PC-9 (cell line): ENCODE measurements at regions of chr7 and their contacts with region 1.

Region 1: GRCh38 chr7:108146070-108146837 is 16.1 kb upstream of the LAMB4 start:
- DNase-seq: peak; percentile 70 to 71
- H3K4me3 ChIP-seq: no peak overlapping the region
- H3K27ac ChIP-seq: no peak overlapping the region
- H3K4me1 ChIP-seq: no peaks in the 10 kb centered on the region
- H3K27me3 ChIP-seq: no peaks in the 10 kb centered on the region
- CTCF ChIP-seq: peak; percentile 89

Region 2: GRCh38 chr7:107201795-107202450 is 944.3 kb before region 1 on chr7:
- CTCF ChIA-PET with region 1: no interaction called
- POLR2A ChIA-PET with region 1: no interaction called
- intact Hi-C with region 1: loop called (anchors 10 kb)
- DNase-seq: peak in 1 of 2 experiments; percentile 55
- H3K4me3 ChIP-seq: no peak overlapping the region
- H3K27ac ChIP-seq: no peak overlapping the region
- H3K4me1 ChIP-seq: no peaks in the 10 kb centered on the region
- H3K27me3 ChIP-seq: no peaks in the 10 kb centered on the region
- CTCF ChIP-seq: peak; percentile 67

Region 3: GRCh38 chr7:107743567-107744344 is 402.5 kb before region 1 on chr7 and contains the start of gene CBLL1:
- CTCF ChIA-PET with region 1: interaction called, 24 read pairs
- POLR2A ChIA-PET with region 1: no interaction called
- intact Hi-C with region 1: loop called (anchors 5 kb)
- DNase-seq: peak; percentile 84 to 98
- H3K4me3 ChIP-seq: peak within 1 kb of the TSS; percentile 72
- H3K27ac ChIP-seq: peak within 1 kb of the TSS; percentile 88
- H3K4me1 ChIP-seq: peaks cover 24% of the 10 kb centered on the region
- H3K27me3 ChIP-seq: no peaks in the 10 kb centered on the region
- CTCF ChIP-seq: no peak; the same call in none of the 2 replicates
- total RNA-seq, gene CBLL1: 24.5 and 31.3 TPM in 2 replicates

Region 4: DNA sequence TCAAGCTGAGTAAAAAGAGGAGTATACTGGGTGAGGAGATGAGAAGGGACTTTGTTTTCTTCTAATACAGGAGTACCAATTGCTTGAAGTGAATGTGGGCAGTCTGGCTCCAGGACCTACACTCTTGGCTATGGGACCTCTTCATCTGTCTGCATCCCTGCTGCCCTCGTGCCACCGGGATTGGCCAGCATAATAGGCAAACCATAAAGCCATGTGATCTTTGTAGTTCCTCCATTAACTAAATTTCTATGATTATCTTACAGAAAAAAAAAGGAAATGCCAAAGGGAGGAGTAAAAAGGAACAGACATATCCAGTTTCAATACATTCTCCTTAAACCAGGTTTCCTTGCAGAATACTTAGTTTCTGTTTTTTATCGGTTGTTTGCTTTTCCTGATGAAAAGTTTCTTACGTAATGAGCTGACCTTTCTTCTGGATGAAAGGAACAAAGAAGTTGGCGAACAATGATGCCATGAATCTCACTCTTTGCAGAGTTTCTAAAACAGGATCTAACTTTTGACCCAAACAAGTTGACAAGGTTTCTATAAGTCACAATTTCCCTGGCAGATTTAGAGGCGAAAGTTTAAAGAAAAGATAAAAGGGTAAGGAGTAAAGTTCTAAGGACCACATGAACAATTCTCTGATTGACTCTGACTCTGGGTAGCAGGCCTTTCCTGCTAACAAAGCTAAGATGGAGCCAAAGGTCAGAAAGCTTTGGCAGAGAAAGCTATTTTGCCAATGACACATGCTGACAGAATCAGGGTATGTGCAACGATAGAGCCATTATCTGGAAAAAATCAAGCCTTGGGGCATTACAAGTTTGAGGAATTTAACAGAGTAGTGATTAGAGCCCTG is 197.4 kb before region 1 on chr7:
- CTCF ChIA-PET with region 1: no interaction called
- POLR2A ChIA-PET with region 1: no interaction called
- intact Hi-C with region 1: loop called (anchors 1 kb)
- DNase-seq: peak; percentile 57 to 94
- H3K4me3 ChIP-seq: peak overlapping the region; percentile 12; the same call in 1 of the 2 replicates
- H3K27ac ChIP-seq: peak overlapping the region; percentile 86
- H3K4me1 ChIP-seq: peaks cover 76% of the 10 kb centered on the region
- H3K27me3 ChIP-seq: no peaks in the 10 kb centered on the region
- CTCF ChIP-seq: no peak

Region 5: DNA sequence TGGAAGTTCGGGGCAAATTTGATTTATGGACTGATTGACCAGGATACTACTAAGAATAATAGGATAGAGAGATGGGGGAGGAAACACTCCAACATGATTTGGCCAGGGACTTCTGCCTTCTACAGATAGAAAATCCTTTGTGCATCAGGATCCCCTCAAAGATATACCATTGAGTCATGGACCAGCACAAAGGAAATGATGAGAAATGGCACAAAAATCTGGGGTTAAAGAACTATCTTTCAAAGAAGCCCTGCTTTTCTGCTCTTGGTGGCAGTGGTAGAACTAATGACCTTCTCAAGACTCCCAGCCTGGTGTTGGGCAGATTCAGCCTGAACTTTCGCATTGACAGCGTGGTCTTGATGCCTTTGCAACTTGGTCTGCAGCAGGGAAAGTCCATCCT is 115.7 kb before region 1 on chr7:
- CTCF ChIA-PET with region 1: interaction called, 15 read pairs
- POLR2A ChIA-PET with region 1: interaction called, 11 read pairs
- intact Hi-C with region 1: no loop called
- DNase-seq: no peak
- H3K4me3 ChIP-seq: no peak overlapping the region
- H3K27ac ChIP-seq: no peak overlapping the region
- H3K4me1 ChIP-seq: peaks cover 17% of the 10 kb centered on the region
- H3K27me3 ChIP-seq: no peaks in the 10 kb centered on the region
- CTCF ChIP-seq: no peak

Region 6: GRCh38 chr7:108253275-108254044 is 107.2 kb after region 1 on chr7:
- CTCF ChIA-PET with region 1: no interaction called
- POLR2A ChIA-PET with region 1: no interaction called
- intact Hi-C with region 1: no loop called
- DNase-seq: peak in 1 of 2 experiments; percentile 32
- H3K4me3 ChIP-seq: no peak overlapping the region
- H3K27ac ChIP-seq: no peak overlapping the region
- H3K4me1 ChIP-seq: no peaks in the 10 kb centered on the region
- H3K27me3 ChIP-seq: no peaks in the 10 kb centered on the region
- CTCF ChIP-seq: no peak